Stomach (tissue), 19 donors: ENCODE measurements at regions of chr14 and their contacts with region 1.

Region 1: GRCh38 chr14:65824285-65824977 is 411.9 kb downstream of the FUT8 start:
- DNase-seq: peak; percentile 53 to 85
- H3K4me3 ChIP-seq: no peak overlapping the region
- H3K27ac ChIP-seq: no peak overlapping the region
- H3K4me1 ChIP-seq: peaks cover 0 to 5% (median 0%) of the 10 kb centered on the region in 4 donors
- H3K27me3 ChIP-seq: peaks cover 0 to 21% (median 0%) of the 10 kb centered on the region in 3 donors
- CTCF ChIP-seq: peak in 5 of 7 experiments; percentile 87 to 95 (median 92)
- EP300 ChIP-seq: no peak
- POLR2A ChIP-seq: no peak

Region 2: DNA sequence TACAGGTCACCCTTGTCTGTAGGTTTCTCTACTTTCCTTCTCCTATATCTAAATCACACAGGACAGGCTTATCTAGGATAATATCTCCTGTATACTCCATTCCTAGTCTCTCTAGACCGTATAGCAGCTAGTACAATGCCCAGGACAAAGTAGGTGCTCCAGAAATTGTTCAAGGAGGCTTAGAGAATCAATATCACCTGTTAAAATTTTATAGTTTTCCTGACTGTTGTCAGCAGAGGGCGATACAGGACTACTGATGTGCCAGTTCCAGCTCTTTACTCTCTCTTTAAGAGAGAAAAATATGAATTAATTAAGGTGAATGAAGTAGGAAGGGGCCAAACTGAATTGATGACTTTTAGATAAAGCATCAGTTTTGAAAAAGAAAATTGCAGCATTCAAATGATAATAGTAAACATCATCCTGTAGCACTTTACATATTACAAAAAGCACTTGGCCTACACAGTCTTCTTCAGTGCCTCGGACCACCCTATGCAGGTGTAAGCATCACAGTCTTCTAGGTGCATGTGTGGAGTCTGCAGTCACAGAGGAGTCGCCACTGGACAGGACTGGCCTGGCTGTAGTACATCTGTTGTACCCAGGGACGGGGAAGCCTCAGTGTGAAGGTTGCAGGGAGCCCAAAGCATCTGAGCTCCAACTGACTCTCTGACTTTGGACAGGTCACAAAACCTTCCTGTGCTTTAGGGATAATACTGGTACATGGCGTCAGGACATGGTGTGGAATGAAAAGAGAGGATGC is 660.2 kb before region 1 on chr14:
- intact Hi-C with region 1: loop called (anchors 10 kb)
- DNase-seq: peak in 1 of 2 donors; percentile 81
- H3K4me3 ChIP-seq: no peak overlapping the region
- H3K27ac ChIP-seq: no peak overlapping the region
- H3K4me1 ChIP-seq: peaks cover 0 to 10% (median 4%) of the 10 kb centered on the region in 4 donors
- H3K27me3 ChIP-seq: no peaks in the 10 kb centered on the region
- CTCF ChIP-seq: peak in 4 of 7 experiments; percentile 45 to 67 (median 58)
- EP300 ChIP-seq: no peak
- POLR2A ChIP-seq: no peak

Region 3: GRCh38 chr14:65412032-65412846 is 412.2 kb before region 1 on chr14 and contains the start of gene FUT8:
- intact Hi-C with region 1: loop called (anchors 5 kb)
- DNase-seq: peak; percentile 98 to 99
- H3K4me3 ChIP-seq: peak within 1 kb of the TSS; percentile 85 to 98 (median 95)
- H3K27ac ChIP-seq: peak within 1 kb of the TSS; percentile 89 to 98 (median 96)
- H3K4me1 ChIP-seq: peaks cover 0 to 51% (median 27%) of the 10 kb centered on the region in 4 donors
- H3K27me3 ChIP-seq: no peaks in the 10 kb centered on the region
- CTCF ChIP-seq: peak in 5 of 7 experiments; percentile 45 to 66 (median 52)
- EP300 ChIP-seq: no peak
- POLR2A ChIP-seq: peak in 1 of 4 donors; percentile 81
- total RNA-seq, gene FUT8: 25.5 to 175 (median 95.5) TPM

Region 4: GRCh38 chr14:65888677-65889076 is 64.2 kb after region 1 on chr14:
- intact Hi-C with region 1: no loop called
- DNase-seq: no peak
- H3K4me3 ChIP-seq: no peak overlapping the region
- H3K27ac ChIP-seq: no peak overlapping the region
- H3K4me1 ChIP-seq: no peaks in the 10 kb centered on the region
- H3K27me3 ChIP-seq: peaks cover 0 to 5% (median 4%) of the 10 kb centered on the region in 3 donors
- CTCF ChIP-seq: no peak
- EP300 ChIP-seq: no peak
- POLR2A ChIP-seq: no peak

Region 5: GRCh38 chr14:67045440-67045839 is 1221.0 kb after region 1 on chr14:
- intact Hi-C with region 1: no loop called
- DNase-seq: no peak
- H3K4me3 ChIP-seq: no peak overlapping the region
- H3K27ac ChIP-seq: no peak overlapping the region
- H3K4me1 ChIP-seq: no peaks in the 10 kb centered on the region
- H3K27me3 ChIP-seq: no peaks in the 10 kb centered on the region
- CTCF ChIP-seq: no peak
- EP300 ChIP-seq: no peak
- POLR2A ChIP-seq: no peak